Esophagus squamous epithelium (tissue), 5 donors: ENCODE measurements at regions of chr2 and their contacts with region 1.

Region 1: GRCh38 chr2:55175254-55176025 is 56.7 kb downstream of the CLHC1 start:
- DNase-seq: no peak
- H3K4me3 ChIP-seq: no peak overlapping the region
- H3K27ac ChIP-seq: no peak overlapping the region
- H3K4me1 ChIP-seq: peaks cover 0 to 21% (median 0%) of the 10 kb centered on the region in 3 donors
- H3K27me3 ChIP-seq: no peaks in the 10 kb centered on the region
- CTCF ChIP-seq: peak; percentile 38 to 78 (median 56)
- POLR2A ChIP-seq: no peak

Region 2: DNA sequence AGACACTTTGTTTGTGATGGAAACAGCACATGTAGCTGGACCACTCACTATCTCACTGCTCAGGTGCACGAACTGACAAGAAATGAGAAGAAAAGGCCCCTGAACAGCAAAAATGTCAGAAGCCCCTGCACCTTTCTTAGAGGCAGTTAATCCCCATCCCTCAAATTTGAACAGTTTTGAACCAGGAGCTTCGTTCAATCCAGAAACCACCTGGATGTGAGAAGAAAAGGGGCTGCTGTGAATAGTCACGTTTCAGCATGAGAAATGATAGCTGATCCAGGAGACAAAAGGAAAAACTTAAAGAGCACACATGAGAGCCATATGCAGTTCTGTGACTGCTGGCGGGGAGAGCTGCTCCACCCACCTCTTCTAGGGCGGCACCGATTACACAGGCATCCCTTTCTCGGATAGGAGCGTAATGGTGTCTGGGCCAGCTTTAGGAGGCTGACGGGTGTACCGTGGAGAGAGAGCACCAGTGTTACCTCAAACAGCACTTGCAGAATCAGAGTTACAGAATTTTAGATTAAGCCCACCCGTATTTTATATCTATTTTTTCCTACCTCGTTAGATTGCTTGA is 569.0 kb before region 1 on chr2:
- intact Hi-C with region 1: no loop called
- DNase-seq: no peak
- H3K4me3 ChIP-seq: no peak overlapping the region
- H3K27ac ChIP-seq: peak overlapping the region in 1 of 4 donors; percentile 39
- H3K4me1 ChIP-seq: peaks cover 12 to 72% (median 33%) of the 10 kb centered on the region in 3 donors
- H3K27me3 ChIP-seq: no peaks in the 10 kb centered on the region
- CTCF ChIP-seq: no peak
- POLR2A ChIP-seq: no peak

Region 3: GRCh38 chr2:54899576-54900200 is 275.8 kb before region 1 on chr2:
- intact Hi-C with region 1: loop called (anchors 5 kb)
- DNase-seq: no peak
- H3K4me3 ChIP-seq: no peak overlapping the region
- H3K27ac ChIP-seq: no peak overlapping the region
- H3K4me1 ChIP-seq: peaks cover 4 to 32% (median 11%) of the 10 kb centered on the region in 3 donors
- H3K27me3 ChIP-seq: no peaks in the 10 kb centered on the region
- CTCF ChIP-seq: peak in 5 of 6 experiments; percentile 41 to 66 (median 59)
- POLR2A ChIP-seq: no peak

Region 4: GRCh38 chr2:55010149-55010591 is 165.3 kb before region 1 on chr2:
- intact Hi-C with region 1: loop called (anchors 10 kb)
- DNase-seq: no peak
- H3K4me3 ChIP-seq: peak overlapping the region; percentile 16 to 60 (median 43)
- H3K27ac ChIP-seq: peak overlapping the region; percentile 65 to 84 (median 75)
- H3K4me1 ChIP-seq: peaks cover 24 to 100% (median 72%) of the 10 kb centered on the region in 3 donors
- H3K27me3 ChIP-seq: no peaks in the 10 kb centered on the region
- CTCF ChIP-seq: peak in 2 of 6 experiments; percentile 8 to 16
- POLR2A ChIP-seq: peak in 3 of 4 donors; percentile 43 to 68 (median 52)